Lower leg skin (tissue), 4 donors: ENCODE measurements at regions of chr6 and their contacts with region 1.

Region 1: DNA sequence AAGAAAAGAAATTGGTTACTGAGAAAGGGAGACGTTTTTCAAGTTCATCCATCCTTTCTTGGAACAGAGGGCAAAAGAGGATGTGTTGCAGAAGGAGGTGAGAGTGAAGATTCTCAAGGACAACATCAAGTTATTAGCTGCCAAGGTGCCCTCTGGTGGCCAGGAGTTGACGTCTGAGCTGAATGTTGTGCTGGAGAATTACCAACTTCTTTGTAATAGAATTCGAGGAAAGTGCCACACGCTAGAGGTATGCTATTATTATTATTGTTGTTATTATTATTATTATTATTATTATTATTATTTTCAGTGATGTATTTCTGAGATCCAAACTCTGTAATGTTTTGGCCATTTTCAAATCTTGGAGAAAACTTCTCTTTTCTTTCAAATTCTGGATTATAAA is 197.0 kb downstream of the UTRN start:
- DNase-seq: peak; percentile 77 to 93
- H3K4me3 ChIP-seq: no peak overlapping the region
- CTCF ChIP-seq: no peak
- POLR2A ChIP-seq: no peak

Region 2: DNA sequence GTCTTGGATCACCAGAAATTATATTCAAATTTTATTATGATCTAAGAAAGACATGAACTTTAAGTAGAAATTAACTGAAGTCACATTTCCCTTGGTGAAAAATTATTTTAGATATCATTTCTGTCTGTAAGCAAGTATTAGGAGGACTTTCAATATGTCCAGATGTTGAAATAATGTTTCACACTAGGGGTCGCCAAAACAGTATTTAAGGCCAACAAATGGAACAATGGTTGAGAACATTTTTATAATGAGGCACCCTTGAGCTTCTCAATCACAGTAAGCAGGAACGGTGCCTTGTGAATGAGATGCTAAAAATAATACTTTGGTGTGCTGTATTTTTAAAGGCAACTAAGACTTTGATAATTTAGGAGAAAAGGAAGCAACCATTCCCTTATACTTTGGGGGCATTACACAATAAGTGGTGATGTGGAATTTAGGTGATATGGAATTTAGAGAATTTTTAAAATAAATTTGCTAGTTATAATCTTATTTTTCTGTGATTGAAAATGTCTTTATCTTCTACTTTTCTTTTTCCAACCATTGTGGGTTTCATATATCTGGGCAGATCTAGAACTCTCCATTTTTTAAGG is 377.1 kb before region 1 on chr6:
- intact Hi-C with region 1: loop called (anchors 5 kb)
- DNase-seq: peak in 1 of 2 donors; percentile 37
- H3K4me3 ChIP-seq: no peak overlapping the region
- CTCF ChIP-seq: peak in 1 of 3 donors; percentile 12
- POLR2A ChIP-seq: no peak

Region 3: DNA sequence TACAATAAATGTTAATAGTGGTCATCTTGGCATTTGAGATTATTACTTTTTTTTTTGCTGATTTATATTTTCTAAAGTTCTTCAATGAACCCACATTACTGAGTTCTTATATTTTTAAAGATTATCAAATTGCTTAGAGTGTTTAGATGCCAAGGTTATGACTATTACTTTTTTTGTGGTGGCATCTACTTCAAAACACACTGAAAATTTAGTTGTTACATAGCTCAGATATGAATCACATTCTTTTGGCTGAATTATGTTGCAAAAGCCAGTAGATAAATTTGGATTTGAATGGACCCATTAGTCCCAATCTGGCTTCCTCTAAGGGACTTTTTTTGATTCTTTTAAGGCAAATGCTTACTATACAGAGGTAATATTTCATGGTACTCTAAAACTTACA is 188.1 kb before region 1 on chr6:
- intact Hi-C with region 1: loop called (anchors 10 kb)
- DNase-seq: no peak
- H3K4me3 ChIP-seq: no peak overlapping the region
- CTCF ChIP-seq: no peak
- POLR2A ChIP-seq: no peak